B cell (primary cell): ENCODE measurements at regions of chr1 and their contacts with region 1.

Region 1: GRCh38 chr1:27300341-27301051 is 21.5 kb upstream of the TMEM222 start:
- DNase-seq: peak; percentile 87
- ATAC-seq: peak; percentile 93
- H3K4me3 ChIP-seq: no peak overlapping the region
- H3K4me3 Mint-ChIP-seq: no peak overlapping the region
- H3K27ac ChIP-seq: no peak overlapping the region
- H3K27ac Mint-ChIP-seq: no peak overlapping the region
- H3K4me1 ChIP-seq: peaks cover 0 to 8% of the 10 kb centered on the region in 2 donors
- H3K4me1 Mint-ChIP-seq: peaks cover 3% of the 10 kb centered on the region
- H3K27me3 ChIP-seq: no peaks in the 10 kb centered on the region
- H3K27me3 Mint-ChIP-seq: no peaks in the 10 kb centered on the region
- CTCF ChIP-seq: peak; percentile 95

Region 2: GRCh38 chr1:26959722-26960615 is 340.5 kb before region 1 on chr1 and contains the start of gene KDF1:
- CTCF ChIA-PET with region 1: no interaction called
- POLR2A ChIA-PET with region 1: no interaction called
- intact Hi-C with region 1: no loop called
- DNase-seq: peak; percentile 82
- ATAC-seq: peak; percentile 89
- H3K4me3 ChIP-seq: peak within 1 kb of the TSS in 4 of 5 experiments; percentile 44 to 80 (median 65)
- H3K4me3 Mint-ChIP-seq: peak within 1 kb of the TSS; percentile 86
- H3K27ac ChIP-seq: peak within 1 kb of the TSS in 1 of 2 donors; percentile 26
- H3K27ac Mint-ChIP-seq: peak within 1 kb of the TSS; percentile 47
- H3K4me1 ChIP-seq: peaks cover 14 to 17% of the 10 kb centered on the region in 2 donors
- H3K4me1 Mint-ChIP-seq: peaks cover 15% of the 10 kb centered on the region
- H3K27me3 ChIP-seq: peaks cover 0 to 27% (median 8%) of the 10 kb centered on the region in 4 experiments
- H3K27me3 Mint-ChIP-seq: peaks cover 20% of the 10 kb centered on the region
- CTCF ChIP-seq: peak; percentile 39
- total RNA-seq, gene KDF1: 0.74 and 1.4 TPM in 2 replicates

Region 3: DNA sequence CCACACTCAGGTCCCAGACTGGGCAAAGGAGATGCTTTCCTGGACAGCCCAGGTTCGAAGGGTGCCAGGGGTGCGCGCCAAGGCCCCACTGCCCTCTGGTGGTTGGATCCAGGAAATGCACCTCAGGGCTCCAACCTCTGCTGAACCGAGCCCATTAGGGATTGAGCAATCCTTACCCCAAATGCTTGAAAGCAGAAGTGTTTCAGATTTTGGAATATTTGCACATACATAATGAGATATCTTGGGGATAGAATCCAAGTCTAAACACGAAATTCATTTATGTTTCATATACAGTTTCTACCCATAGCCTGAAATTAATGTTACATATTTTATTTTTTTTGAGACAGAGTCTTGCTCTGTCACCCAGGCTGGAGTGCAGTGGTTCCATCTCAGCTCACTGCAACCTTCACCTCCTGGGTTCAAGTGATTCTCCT is 203.0 kb before region 1 on chr1:
- CTCF ChIA-PET with region 1: interaction called, 134 read pairs
- POLR2A ChIA-PET with region 1: no interaction called
- intact Hi-C with region 1: no loop called
- DNase-seq: peak; percentile 81
- ATAC-seq: peak; percentile 48
- H3K4me3 ChIP-seq: no peak overlapping the region
- H3K4me3 Mint-ChIP-seq: no peak overlapping the region
- H3K27ac ChIP-seq: no peak overlapping the region
- H3K27ac Mint-ChIP-seq: peak overlapping the region; percentile 53
- H3K4me1 ChIP-seq: peaks cover 12 to 23% of the 10 kb centered on the region in 2 donors
- H3K4me1 Mint-ChIP-seq: peaks cover 20% of the 10 kb centered on the region
- H3K27me3 ChIP-seq: no peaks in the 10 kb centered on the region
- H3K27me3 Mint-ChIP-seq: no peaks in the 10 kb centered on the region
- CTCF ChIP-seq: peak; percentile 95

Region 4: DNA sequence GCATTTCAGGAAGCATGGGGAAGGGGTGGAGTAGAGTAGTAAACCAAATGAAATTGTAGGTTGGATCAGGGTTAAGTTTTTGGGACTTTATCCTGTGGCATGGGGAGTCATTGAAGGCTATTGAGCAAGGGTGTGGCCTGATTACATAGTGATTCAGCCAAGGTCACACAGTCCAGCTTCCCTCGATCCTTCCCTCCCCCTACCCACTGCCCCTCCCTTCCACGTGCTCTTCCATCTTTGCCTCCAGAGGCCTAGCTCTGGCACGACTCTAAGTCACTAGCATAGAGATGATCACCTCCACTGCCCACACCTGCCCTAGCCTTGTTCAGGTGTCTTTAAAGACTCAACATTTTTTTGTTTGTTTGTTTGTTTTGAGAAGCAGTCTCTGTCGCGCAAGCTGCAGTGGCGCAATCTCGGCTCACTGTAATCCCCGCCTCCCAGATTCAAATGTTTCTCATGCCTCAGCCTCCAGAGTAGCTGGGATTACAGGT is 108.4 kb before region 1 on chr1:
- CTCF ChIA-PET with region 1: interaction called, 19 read pairs
- POLR2A ChIA-PET with region 1: no interaction called
- intact Hi-C with region 1: no loop called
- DNase-seq: no peak
- ATAC-seq: no peak
- H3K4me3 ChIP-seq: no peak overlapping the region
- H3K4me3 Mint-ChIP-seq: no peak overlapping the region
- H3K27ac ChIP-seq: no peak overlapping the region
- H3K27ac Mint-ChIP-seq: no peak overlapping the region
- H3K4me1 ChIP-seq: no peaks in the 10 kb centered on the region
- H3K4me1 Mint-ChIP-seq: no peaks in the 10 kb centered on the region
- H3K27me3 ChIP-seq: no peaks in the 10 kb centered on the region
- H3K27me3 Mint-ChIP-seq: no peaks in the 10 kb centered on the region
- CTCF ChIP-seq: no peak

Region 5: DNA sequence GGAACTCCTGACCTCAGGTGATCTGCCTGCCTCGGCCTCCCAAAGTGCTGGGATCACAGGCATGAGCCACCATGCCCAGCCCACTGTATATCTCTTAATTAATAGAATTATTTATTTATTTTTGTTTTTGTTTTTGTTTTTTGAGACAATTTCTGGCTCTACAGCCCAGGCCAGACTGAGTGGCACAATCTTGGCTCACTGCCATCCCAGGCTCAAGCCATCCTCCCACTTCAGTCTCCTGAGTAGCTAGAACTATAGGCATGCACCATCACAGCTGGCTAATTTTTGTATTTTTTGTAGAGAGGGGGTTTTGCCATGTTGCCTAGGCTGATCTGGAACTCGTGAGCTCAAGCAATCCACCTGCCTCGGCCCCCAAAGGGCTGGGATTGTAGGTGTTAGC is 81.8 kb before region 1 on chr1:
- CTCF ChIA-PET with region 1: no interaction called
- POLR2A ChIA-PET with region 1: no interaction called
- intact Hi-C with region 1: no loop called
- DNase-seq: no peak
- ATAC-seq: no peak
- H3K4me3 ChIP-seq: no peak overlapping the region
- H3K4me3 Mint-ChIP-seq: no peak overlapping the region
- H3K27ac ChIP-seq: no peak overlapping the region
- H3K27ac Mint-ChIP-seq: no peak overlapping the region
- H3K4me1 ChIP-seq: no peaks in the 10 kb centered on the region
- H3K4me1 Mint-ChIP-seq: no peaks in the 10 kb centered on the region
- H3K27me3 ChIP-seq: no peaks in the 10 kb centered on the region
- H3K27me3 Mint-ChIP-seq: no peaks in the 10 kb centered on the region
- CTCF ChIP-seq: no peak

Region 6: DNA sequence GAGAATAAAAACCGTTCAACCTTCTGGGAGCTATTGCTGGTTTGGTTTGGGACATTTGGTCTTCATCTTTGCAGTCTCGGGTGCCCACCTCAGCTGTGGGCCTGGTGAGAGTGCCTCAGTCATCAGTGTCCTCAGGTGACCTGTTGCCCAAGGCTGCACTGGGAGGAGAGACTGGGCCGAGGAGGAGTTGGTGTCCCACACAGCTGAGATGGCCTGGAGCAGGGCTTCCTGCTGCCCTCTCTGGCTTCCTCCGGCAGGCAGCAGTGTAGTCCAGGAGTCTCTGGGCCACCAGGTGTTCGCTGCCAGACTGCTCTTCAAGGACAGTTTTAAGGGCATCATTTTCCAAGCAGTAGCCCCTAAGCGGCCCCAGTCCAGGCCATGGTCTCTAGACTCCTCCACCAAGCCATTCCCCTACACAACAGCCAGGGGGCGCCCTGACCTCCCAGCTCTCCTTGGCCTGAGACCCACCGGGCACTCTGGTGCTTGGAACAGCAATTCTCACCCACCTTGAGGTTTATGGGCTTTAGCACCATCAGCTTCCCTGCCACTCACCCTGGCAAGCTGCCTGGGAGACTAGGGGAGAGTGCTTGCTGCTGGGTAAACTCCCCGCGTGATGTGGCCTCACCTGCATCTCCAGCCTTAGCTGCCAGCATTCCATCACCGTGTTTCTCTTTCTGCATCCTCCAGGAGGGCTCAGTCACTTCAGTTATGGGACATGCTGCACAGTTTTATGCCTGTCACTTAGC is 32.2 kb after region 1 on chr1:
- CTCF ChIA-PET with region 1: interaction called, 51 read pairs
- POLR2A ChIA-PET with region 1: interaction called, 13 read pairs
- intact Hi-C with region 1: no loop called
- DNase-seq: peak; percentile 73
- ATAC-seq: peak; percentile 90
- H3K4me3 ChIP-seq: no peak overlapping the region
- H3K4me3 Mint-ChIP-seq: no peak overlapping the region
- H3K27ac ChIP-seq: no peak overlapping the region
- H3K27ac Mint-ChIP-seq: peak overlapping the region; percentile 15
- H3K4me1 ChIP-seq: peaks cover 11 to 24% of the 10 kb centered on the region in 2 donors
- H3K4me1 Mint-ChIP-seq: peaks cover 38% of the 10 kb centered on the region
- H3K27me3 ChIP-seq: no peaks in the 10 kb centered on the region
- H3K27me3 Mint-ChIP-seq: no peaks in the 10 kb centered on the region
- CTCF ChIP-seq: peak; percentile 87

Region 7: GRCh38 chr1:27365372-27366112 is 65.0 kb after region 1 on chr1:
- CTCF ChIA-PET with region 1: interaction called, 25 read pairs
- POLR2A ChIA-PET with region 1: no interaction called
- intact Hi-C with region 1: no loop called
- DNase-seq: peak; percentile 88
- ATAC-seq: peak; percentile 70
- H3K4me3 ChIP-seq: peak overlapping the region; percentile 32 to 74 (median 60)
- H3K4me3 Mint-ChIP-seq: peak overlapping the region; percentile 93
- H3K27ac ChIP-seq: no peak overlapping the region
- H3K27ac Mint-ChIP-seq: peak overlapping the region; percentile 82
- H3K4me1 ChIP-seq: peaks cover 33 to 47% of the 10 kb centered on the region in 2 donors
- H3K4me1 Mint-ChIP-seq: peaks cover 54% of the 10 kb centered on the region
- H3K27me3 ChIP-seq: no peaks in the 10 kb centered on the region
- H3K27me3 Mint-ChIP-seq: no peaks in the 10 kb centered on the region
- CTCF ChIP-seq: no peak